ENCODE measurements at regions of chr16 and their contacts with region 1.

Region 1: DNA sequence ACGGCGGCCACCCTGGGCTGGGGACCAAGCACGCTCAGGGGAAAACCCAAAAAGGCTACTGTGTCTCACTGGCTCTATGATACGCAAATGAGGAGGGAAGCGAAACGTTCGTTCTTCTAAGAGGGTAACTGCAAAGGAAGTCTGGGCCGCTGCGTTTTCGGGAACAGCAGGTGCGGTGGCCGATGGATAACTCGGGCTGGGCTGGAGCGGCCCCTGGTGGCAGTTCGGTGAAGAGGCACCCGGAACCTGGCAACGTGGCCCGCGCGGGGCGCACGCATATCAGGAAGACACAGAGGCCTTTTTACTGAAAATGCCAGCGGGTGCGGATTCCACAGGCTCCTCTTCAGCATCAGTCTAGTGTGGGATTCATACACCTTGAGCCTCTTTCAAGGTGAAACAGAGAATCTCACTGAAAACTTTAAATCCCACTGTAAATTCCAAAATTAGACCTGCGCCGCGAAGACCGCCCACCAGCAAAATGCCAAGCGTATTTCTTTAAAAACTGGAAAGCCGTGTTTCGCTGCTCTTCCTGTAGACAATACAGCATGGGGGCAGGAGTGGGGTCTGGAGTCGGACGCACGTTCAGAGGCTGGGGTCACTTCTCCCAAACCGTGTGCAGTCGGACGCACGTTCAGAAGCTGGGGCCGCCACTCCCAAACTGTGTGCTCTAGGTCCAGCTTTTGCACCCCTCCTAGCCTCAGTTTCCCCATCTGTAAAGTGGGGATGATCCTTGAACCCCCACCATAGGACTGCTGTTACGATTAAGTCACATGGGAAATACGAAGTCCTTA is 44.4 kb upstream of the METTL9 start:
- DNase-seq: peak; percentile 81 to 96 (median 89)
- ATAC-seq: peak; percentile 99
- H3K4me3 ChIP-seq: peak overlapping the region in 1 of 2 experiments; percentile 14
- H3K4me3 Mint-ChIP-seq: peak overlapping the region; percentile 57
- H3K27ac ChIP-seq: no peak overlapping the region
- H3K27ac Mint-ChIP-seq: no peak overlapping the region
- H3K4me1 ChIP-seq: peaks cover 3% of the 10 kb centered on the region
- H3K4me1 Mint-ChIP-seq: peaks cover 6% of the 10 kb centered on the region
- H3K27me3 ChIP-seq: peaks cover 0 to 3% of the 10 kb centered on the region in 2 experiments
- H3K27me3 Mint-ChIP-seq: peaks cover 6% of the 10 kb centered on the region
- CTCF ChIP-seq: peak; percentile 100

Region 2: GRCh38 chr16:19907161-19907992 is 1647.6 kb before region 1 on chr16:
- CTCF ChIA-PET with region 1: no interaction called
- POLR2A ChIA-PET with region 1: no interaction called
- intact Hi-C with region 1: loop called in 1 of 2 experiments (anchors 10 kb)
- DNase-seq: peak; percentile 38 to 80 (median 67)
- ATAC-seq: peak; percentile 100
- H3K4me3 ChIP-seq: peak overlapping the region in 1 of 2 experiments; percentile 11
- H3K4me3 Mint-ChIP-seq: peak overlapping the region; percentile 76
- H3K27ac ChIP-seq: no peak overlapping the region
- H3K27ac Mint-ChIP-seq: no peak overlapping the region
- H3K4me1 ChIP-seq: no peaks in the 10 kb centered on the region
- H3K4me1 Mint-ChIP-seq: peaks cover 10% of the 10 kb centered on the region
- H3K27me3 ChIP-seq: no peaks in the 10 kb centered on the region
- H3K27me3 Mint-ChIP-seq: peaks cover 17% of the 10 kb centered on the region
- CTCF ChIP-seq: peak; percentile 94

Region 3: GRCh38 chr16:20806168-20807050 is 748.6 kb before region 1 on chr16 and contains the starts of genes ERI2 and REXO5:
- CTCF ChIA-PET with region 1: no interaction called
- POLR2A ChIA-PET with region 1: no interaction called
- intact Hi-C with region 1: no loop called
- DNase-seq: peak; percentile 43 to 85 (median 74)
- ATAC-seq: peak; percentile 91
- H3K4me3 ChIP-seq: peak within 1 kb of the TSS; percentile 75 to 77
- H3K4me3 Mint-ChIP-seq: peak within 1 kb of the TSS; percentile 98
- H3K27ac ChIP-seq: peak within 1 kb of the TSS; percentile 42 to 77
- H3K27ac Mint-ChIP-seq: peak within 1 kb of the TSS; percentile 82
- H3K4me1 ChIP-seq: peaks cover 10% of the 10 kb centered on the region
- H3K4me1 Mint-ChIP-seq: peaks cover 18% of the 10 kb centered on the region
- H3K27me3 ChIP-seq: no peaks in the 10 kb centered on the region
- H3K27me3 Mint-ChIP-seq: no peaks in the 10 kb centered on the region
- CTCF ChIP-seq: peak; percentile 21
- total RNA-seq, gene ERI2: 0.14 TPM in 1 of 2 experiments, not detected in the other
- total RNA-seq, gene REXO5: 0.38 to 0.42 TPM

Region 4: DNA sequence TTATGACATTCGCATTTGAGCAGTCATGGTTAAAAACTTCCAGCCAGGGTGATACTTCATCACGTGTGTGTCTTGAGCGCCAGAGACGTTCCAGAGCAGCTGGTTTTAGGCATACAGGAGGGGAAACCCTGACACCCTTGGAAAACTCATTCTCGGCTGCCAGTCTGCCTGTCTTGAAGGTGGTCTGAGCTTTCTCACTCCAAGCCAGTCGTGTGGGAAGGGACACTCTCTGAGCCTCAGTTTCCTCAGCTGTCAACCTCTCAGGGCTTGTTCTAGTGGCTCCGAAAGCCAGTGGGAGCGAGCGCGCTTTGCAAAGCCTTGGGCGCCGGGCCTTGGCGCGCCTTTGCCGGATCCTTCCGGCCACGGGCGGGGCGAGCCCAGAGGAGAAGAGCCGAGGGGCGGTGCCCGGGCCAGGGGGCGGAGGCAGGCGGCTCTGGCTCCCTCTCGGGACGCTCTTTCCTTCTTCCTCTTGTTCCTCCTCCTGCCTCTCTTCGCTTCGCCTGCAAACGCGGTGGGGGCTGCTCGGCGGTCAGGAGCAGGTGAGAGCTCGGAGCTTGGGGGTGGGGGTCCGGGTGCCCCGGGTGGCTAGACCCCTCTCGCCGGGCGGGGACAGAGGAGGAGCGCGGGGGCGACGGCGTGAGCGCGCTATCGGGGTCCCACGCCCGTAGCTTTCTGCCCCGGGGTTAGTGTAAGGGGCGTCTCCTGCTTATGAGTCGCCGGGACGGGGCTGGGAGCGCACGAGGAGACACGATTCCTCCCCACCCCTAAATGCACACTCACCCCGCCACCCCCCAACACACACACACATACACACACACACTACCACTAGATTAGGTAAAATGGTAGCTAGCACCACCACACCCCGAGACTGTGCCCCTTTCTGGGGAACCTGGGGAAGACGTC is 396.5 kb before region 1 on chr16 and contains the start of gene LDAF1:
- CTCF ChIA-PET with region 1: no interaction called
- POLR2A ChIA-PET with region 1: no interaction called
- intact Hi-C with region 1: loop called in 1 of 2 experiments (anchors 10 kb)
- DNase-seq: peak; percentile 47 to 86 (median 75)
- ATAC-seq: peak; percentile 96
- H3K4me3 ChIP-seq: peak within 1 kb of the TSS; percentile 73 to 76
- H3K4me3 Mint-ChIP-seq: peak within 1 kb of the TSS; percentile 92
- H3K27ac ChIP-seq: peak within 1 kb of the TSS; percentile 17 to 54
- H3K27ac Mint-ChIP-seq: peak within 1 kb of the TSS; percentile 77
- H3K4me1 ChIP-seq: peaks cover 18% of the 10 kb centered on the region
- H3K4me1 Mint-ChIP-seq: peaks cover 31% of the 10 kb centered on the region
- H3K27me3 ChIP-seq: no peaks in the 10 kb centered on the region
- H3K27me3 Mint-ChIP-seq: no peaks in the 10 kb centered on the region
- CTCF ChIP-seq: no peak
- total RNA-seq, gene LDAF1: 7.7 to 7.9 TPM

Region 5: DNA sequence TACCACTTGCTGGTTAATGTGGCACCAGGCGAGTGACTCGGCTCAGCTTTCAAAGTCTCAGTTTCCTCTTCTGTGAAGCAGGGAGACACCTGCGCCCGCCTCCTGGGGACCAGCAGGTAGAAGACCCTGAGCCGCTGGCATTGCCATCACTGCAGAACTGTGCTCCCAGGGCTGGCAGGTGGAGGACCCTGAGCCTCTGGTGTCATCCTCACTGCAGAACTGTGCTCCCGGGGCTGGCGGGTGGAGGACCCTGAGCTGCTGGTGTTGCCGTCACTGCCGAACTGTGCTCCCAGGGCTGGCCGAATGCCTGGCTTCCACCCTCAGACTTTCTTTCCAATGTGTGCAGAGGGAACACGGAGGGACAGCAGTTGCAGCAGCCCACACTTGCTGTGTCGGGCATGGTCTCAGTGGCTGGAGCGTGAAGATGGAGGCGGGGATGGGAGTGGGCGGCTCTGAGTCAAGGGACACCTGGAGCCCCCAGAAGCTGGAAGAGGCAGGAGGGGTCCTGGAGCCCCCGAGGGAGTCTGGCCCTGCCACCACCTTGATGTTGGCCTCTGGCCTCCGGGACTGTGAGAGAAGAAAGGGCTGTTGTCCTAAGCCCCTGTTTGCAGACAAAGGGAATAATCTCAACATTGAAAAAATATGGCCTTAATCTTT is 31.5 kb before region 1 on chr16:
- CTCF ChIA-PET with region 1: no interaction called
- POLR2A ChIA-PET with region 1: interaction called, 3 read pairs
- intact Hi-C with region 1: loop called in 1 of 2 experiments (anchors 2 kb)
- DNase-seq: no peak
- ATAC-seq: no peak
- H3K4me3 ChIP-seq: no peak overlapping the region
- H3K4me3 Mint-ChIP-seq: no peak overlapping the region
- H3K27ac ChIP-seq: no peak overlapping the region
- H3K27ac Mint-ChIP-seq: no peak overlapping the region
- H3K4me1 ChIP-seq: no peaks in the 10 kb centered on the region
- H3K4me1 Mint-ChIP-seq: peaks cover 8% of the 10 kb centered on the region
- H3K27me3 ChIP-seq: no peaks in the 10 kb centered on the region
- H3K27me3 Mint-ChIP-seq: no peaks in the 10 kb centered on the region
- CTCF ChIP-seq: no peak

Region 6: DNA sequence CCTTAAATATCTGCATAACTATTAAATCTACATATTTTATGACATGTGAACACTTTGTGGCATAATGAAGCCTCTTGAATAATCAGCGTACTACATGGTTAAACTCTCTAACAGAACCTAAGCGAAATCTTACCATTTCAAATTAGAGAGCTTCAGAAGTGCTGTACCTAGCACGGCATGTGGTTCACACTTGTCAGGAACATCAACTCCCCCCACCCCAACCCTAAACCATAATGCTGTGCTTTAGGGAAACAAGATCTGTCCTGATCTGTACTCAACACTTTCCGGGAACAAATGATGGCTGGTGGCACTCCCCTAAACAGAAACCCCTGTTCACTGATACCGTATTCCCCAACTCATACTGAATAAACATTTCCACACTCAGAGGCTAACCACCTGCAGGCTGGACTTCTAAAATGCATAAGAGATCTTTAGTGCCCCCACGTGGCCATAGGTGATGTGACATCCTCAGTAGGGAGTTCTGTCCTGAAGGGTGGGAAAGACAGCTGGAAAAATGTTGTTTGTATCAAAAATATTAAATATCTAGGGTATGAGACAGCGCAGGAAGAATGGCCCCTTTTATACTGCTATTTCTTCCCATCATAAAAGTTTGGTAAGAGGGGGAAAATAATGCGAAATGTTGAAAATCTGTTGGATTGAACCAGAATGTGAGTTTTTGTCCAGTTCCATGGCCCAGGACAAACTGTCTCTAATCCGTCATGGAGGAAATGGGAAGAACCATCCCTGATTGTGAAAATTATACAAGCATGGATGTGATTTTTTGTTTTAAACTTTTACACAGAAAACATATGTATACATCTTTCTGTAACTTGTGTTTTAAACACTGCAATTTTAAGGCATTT is 1505.7 kb after region 1 on chr16:
- CTCF ChIA-PET with region 1: no interaction called
- POLR2A ChIA-PET with region 1: no interaction called
- intact Hi-C with region 1: loop called in 1 of 2 experiments (anchors 1 kb)
- DNase-seq: peak; percentile 5 to 67 (median 54)
- ATAC-seq: peak; percentile 62
- H3K4me3 ChIP-seq: no peak overlapping the region
- H3K4me3 Mint-ChIP-seq: no peak overlapping the region
- H3K27ac ChIP-seq: no peak overlapping the region
- H3K27ac Mint-ChIP-seq: no peak overlapping the region
- H3K4me1 ChIP-seq: no peaks in the 10 kb centered on the region
- H3K4me1 Mint-ChIP-seq: no peaks in the 10 kb centered on the region
- H3K27me3 ChIP-seq: no peaks in the 10 kb centered on the region
- H3K27me3 Mint-ChIP-seq: peaks cover 12% of the 10 kb centered on the region
- CTCF ChIP-seq: peak; percentile 82